ENCODE measurements at regions of chr10 and their contacts with region 1.

Region 1: DNA sequence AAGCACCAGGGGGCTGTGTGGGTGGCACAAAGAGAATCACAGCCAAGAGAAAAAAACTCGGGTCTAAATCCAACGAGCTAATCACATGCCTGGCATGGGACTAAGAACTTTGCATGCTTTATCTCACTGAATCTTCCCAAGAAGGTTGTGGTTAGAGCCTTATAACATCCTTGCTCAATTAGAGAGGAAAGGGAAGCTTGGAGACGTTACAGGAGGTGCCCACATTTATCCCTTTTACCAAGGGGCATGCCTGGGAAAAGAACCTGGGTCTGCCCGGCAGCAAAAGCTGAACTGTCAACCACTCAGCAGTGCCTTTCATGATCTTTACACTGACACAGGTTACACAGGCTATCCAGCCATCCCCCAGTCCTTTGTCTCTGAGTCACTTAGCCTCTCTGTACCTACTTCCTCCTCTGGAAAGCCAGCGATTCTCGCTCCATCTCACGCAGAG is 190.1 kb downstream of the PRPF18 start:
- DNase-seq: no peak
- H3K4me3 ChIP-seq: no peak overlapping the region
- H3K27ac ChIP-seq: no peak overlapping the region
- H3K4me1 ChIP-seq: no peaks in the 10 kb centered on the region
- H3K27me3 ChIP-seq: no peaks in the 10 kb centered on the region
- CTCF ChIP-seq: no peak
- POLR2A ChIP-seq: no peak

Region 2: GRCh38 chr10:13365243-13365642 is 411.6 kb before region 1 on chr10:
- intact Hi-C with region 1: loop called (anchors 5 to 10 kb)
- DNase-seq: no peak
- H3K4me3 ChIP-seq: no peak overlapping the region
- H3K27ac ChIP-seq: no peak overlapping the region
- H3K4me1 ChIP-seq: no peaks in the 10 kb centered on the region
- H3K27me3 ChIP-seq: peaks cover 4% of the 10 kb centered on the region
- CTCF ChIP-seq: no peak
- POLR2A ChIP-seq: no peak

Region 3: GRCh38 chr10:13414894-13415293 is 362.0 kb before region 1 on chr10:
- intact Hi-C with region 1: no loop called
- DNase-seq: peak in 2 of 7 donors; percentile 17 to 18
- H3K4me3 ChIP-seq: no peak overlapping the region
- H3K27ac ChIP-seq: no peak overlapping the region
- H3K4me1 ChIP-seq: no peaks in the 10 kb centered on the region
- H3K27me3 ChIP-seq: no peaks in the 10 kb centered on the region
- CTCF ChIP-seq: no peak
- POLR2A ChIP-seq: no peak

Region 4: DNA sequence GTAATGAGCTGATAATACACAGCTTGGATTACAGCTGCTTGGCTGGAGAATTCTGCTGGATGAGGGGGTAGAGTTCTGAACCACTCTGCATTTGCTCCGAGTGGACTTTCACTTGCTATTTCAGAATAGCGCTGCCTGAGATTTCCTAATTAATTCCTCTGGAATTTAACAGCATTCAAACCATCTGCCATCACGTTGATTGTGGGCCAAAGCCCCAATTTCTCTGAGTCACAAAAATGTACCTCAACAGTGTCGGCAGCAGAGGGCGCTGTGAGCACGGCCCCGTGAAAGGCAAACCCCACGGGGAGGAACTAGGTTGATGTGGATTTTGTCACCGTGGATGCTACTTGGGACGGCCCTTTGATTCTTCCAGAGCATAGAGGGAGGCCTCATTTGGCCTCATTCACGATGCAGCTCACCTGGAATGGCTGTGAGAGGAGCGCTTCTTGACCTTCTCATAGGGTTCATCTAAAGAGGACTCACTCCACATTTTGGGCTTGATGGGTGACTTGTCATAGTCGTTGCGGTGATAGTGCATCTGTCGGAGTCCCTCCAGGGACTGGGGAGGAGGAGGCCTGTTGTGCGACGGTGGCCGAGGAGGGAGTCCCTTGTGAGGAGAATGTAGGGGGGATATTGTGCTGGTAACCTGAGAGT is 116.9 kb before region 1 on chr10:
- intact Hi-C with region 1: loop called (anchors 2 to 5 kb)
- DNase-seq: peak; percentile 36 to 75 (median 47)
- H3K4me3 ChIP-seq: no peak overlapping the region
- H3K27ac ChIP-seq: peak overlapping the region in 1 of 5 donors; percentile 34
- H3K4me1 ChIP-seq: peaks cover 0 to 10% of the 10 kb centered on the region in 2 donors
- H3K27me3 ChIP-seq: no peaks in the 10 kb centered on the region
- CTCF ChIP-seq: peak; percentile 63 to 85 (median 74)
- POLR2A ChIP-seq: no peak

Region 5: DNA sequence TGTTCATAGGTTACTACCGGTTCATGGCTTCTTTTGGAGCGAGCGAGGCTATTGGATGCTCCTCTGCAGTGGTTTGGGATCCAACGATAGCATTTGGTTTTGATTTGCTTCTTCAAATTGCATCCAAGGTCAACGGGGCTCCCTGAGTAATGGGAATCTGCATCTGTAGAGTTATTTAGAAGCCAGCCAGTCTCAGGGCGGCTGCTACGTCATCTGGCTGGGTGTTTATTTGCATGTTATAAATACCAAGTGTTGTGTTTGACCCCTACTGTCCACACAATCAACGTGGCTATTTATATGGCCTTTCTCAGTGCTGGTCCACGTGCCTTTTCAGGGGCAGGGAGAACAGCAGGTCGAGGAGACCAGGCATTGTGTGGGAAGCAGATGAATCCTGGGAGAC is 52.4 kb before region 1 on chr10:
- intact Hi-C with region 1: no loop called
- DNase-seq: peak in 3 of 7 donors; percentile 19 to 84 (median 35)
- H3K4me3 ChIP-seq: no peak overlapping the region
- H3K27ac ChIP-seq: no peak overlapping the region
- H3K4me1 ChIP-seq: no peaks in the 10 kb centered on the region
- H3K27me3 ChIP-seq: no peaks in the 10 kb centered on the region
- CTCF ChIP-seq: no peak
- POLR2A ChIP-seq: no peak